Tibial artery (tissue), 4 donors: ENCODE measurements at regions of chr17 and their contacts with region 1.

Region 1: DNA sequence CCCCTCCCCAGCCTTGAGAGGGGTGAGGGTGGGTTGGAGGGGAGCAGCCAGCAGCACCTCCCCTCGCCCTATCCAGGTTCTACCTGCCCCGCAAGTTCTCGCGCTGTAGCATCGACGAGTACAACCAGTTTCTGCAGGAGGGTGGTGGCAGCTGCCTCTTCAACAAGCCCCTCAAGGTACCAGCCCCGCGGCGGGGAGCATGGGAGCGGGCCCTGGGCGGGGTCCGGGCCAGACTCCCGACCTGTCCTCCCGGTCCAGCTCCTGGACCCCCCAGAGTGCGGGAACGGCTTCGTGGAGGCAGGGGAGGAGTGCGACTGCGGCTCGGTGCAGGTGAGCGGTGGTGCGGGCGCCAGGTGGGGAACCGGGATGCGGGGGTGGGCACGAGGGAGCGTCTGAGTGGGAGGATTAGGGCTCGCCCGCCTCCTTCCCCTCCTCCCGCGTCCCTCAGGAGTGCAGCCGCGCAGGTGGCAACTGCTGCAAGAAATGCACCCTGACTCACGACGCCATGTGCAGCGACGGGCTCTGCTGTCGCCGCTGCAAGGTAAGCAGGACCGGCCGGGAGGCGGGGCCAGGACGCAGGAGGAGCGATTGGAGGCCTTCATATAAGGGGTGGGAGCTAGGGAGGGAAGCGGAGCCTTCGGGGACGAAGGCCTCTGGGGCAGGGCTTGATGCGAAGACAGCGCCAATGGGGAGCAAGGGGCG is 16.5 kb downstream of the ADAM11 start:
- DNase-seq: peak; percentile 95 to 97
- H3K4me3 ChIP-seq: peak overlapping the region; percentile 51 to 73
- H3K27ac ChIP-seq: no peak overlapping the region
- H3K4me1 ChIP-seq: peaks cover 0 to 32% (median 23%) of the 10 kb centered on the region in 4 donors
- H3K27me3 ChIP-seq: peaks cover 0 to 38% of the 10 kb centered on the region in 2 donors
- CTCF ChIP-seq: no peak

Region 2: DNA sequence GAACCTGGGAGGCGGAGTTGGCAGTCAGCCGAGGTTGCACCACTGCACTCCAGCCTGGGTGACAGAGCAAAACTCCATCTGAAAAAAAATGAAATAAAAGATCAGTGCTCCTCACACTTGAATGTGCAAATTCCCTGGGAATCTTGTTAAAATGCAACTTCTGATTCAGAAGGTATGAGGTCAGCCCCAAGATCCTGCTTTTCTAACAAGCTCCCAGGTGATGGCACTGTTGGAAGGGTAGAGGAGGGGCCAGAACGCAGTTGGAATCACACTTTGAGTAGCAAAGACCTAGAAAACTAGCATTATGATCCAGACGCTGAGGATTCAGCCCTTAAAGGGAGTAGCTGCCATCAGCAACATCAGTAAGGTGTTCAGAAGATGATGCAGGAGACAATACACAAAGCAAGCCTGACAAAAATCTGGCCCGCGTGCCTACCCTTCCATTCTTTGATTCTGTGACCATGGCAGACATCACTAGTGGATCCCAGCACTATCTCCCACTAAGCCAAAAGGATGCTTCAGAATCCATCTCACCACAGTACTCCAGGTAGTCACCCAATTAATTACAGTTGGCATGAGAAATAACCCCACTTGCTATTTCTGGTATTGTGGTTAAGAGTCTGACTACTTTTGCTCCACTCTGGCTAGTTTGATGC is 152.1 kb before region 1 on chr17:
- intact Hi-C with region 1: no loop called
- DNase-seq: no peak
- H3K4me3 ChIP-seq: no peak overlapping the region
- H3K27ac ChIP-seq: no peak overlapping the region
- H3K4me1 ChIP-seq: no peaks in the 10 kb centered on the region
- H3K27me3 ChIP-seq: no peaks in the 10 kb centered on the region
- CTCF ChIP-seq: no peak

Region 3: GRCh38 chr17:44864866-44865660 is 89.8 kb after region 1 on chr17:
- intact Hi-C with region 1: loop called (anchors 2 kb)
- DNase-seq: peak; percentile 60 to 67
- H3K4me3 ChIP-seq: no peak overlapping the region
- H3K27ac ChIP-seq: no peak overlapping the region
- H3K4me1 ChIP-seq: no peaks in the 10 kb centered on the region
- H3K27me3 ChIP-seq: no peaks in the 10 kb centered on the region
- CTCF ChIP-seq: peak; percentile 88 to 91

Region 4: GRCh38 chr17:45021607-45022287 is 246.5 kb after region 1 on chr17:
- intact Hi-C with region 1: loop called (anchors 5 kb)
- DNase-seq: peak; percentile 54 to 80
- H3K4me3 ChIP-seq: peak overlapping the region; percentile 45 to 53
- H3K27ac ChIP-seq: peak overlapping the region; percentile 60 to 73
- H3K4me1 ChIP-seq: peaks cover 0 to 45% (median 24%) of the 10 kb centered on the region in 4 donors
- H3K27me3 ChIP-seq: peaks cover 0 to 3% of the 10 kb centered on the region in 2 donors
- CTCF ChIP-seq: peak; percentile 85 to 90